Right ventricle myocardium superior (tissue), 1 donor: ENCODE measurements at regions of chr2 and their contacts with region 1.

Region 1: DNA sequence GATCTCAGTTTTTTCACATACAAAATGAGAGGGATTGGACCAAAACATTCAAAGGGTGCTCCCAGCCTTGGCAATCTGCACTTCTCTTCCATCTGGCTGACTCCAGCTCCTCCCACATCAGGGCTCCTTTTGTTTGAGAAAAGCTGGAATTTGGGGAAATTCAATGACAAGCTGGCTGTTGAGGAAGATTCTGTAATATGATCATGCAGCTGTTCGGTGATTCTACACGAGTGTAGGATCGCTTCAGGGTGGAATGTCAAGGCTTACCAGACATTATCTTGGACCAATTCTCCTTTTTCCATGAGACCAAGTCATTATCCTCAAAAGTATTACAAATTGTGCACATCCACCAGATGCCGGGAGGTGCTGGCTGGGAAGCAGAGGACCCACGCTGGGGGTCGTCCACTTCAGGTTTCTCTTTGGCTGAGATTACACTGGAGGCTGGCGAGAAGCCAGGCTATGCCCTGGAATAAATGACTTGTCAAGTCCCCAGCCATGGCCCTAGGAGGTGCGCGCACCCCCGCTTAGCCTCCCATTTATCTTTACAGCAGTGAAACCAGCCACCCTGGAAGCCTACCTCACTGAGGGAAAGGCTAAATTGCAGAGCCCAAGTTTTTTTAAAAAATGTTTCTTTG is 42.6 kb upstream of the LCLAT1 start:
- DNase-seq: no peak
- ATAC-seq: peak; percentile 24

Region 2: DNA sequence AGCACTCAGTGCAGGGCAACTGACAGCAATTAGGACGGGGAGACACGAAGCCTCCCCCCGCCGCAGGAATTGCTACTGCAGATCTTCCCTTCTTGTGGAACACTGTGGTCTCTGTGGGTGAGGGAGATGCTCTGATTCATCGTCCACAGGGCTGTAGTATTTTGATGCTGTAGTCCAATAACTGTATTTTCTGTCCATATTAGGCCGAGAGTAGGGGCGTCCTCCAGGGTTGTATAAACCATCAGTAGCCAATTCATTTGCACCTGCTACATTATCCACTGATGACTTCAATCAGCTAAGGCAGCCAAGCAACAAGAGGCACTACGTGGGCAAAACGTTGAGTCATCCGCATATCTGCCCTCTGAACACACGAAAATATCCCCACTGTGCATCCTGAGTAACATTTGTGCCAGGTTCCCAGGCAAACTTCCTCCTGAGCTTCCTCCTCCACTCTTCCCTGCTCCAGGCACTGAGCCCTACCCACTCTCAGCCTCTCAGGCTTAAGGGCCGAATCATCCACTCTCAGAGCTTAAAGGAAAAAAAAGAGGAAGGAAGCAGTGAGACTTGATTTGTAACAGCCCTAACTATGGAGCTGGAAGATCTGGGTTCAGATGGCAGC is 111.0 kb before region 1 on chr2:
- intact Hi-C with region 1: no loop called
- DNase-seq: no peak
- ATAC-seq: peak; percentile 26

Region 3: GRCh38 chr2:30366199-30366691 is 38.2 kb before region 1 on chr2:
- intact Hi-C with region 1: loop called (anchors 5 kb)
- DNase-seq: no peak
- ATAC-seq: no peak